Activated CD4-positive, alpha-beta T cell treated with anti-CD3 and anti-CD28 coated beads for 36 hours (primary cell): ENCODE measurements at regions of chr1 and their contacts with region 1.

Region 1: GRCh38 chr1:15949453-15950245 is 26.3 kb downstream of the ZBTB17 start:
- DNase-seq: peak; percentile 94
- ATAC-seq: peak; percentile 75
- H3K4me3 Mint-ChIP-seq: peak overlapping the region; percentile 61
- H3K27ac Mint-ChIP-seq: peak overlapping the region; percentile 95
- H3K4me1 Mint-ChIP-seq: peaks cover 74% of the 10 kb centered on the region
- H3K27me3 Mint-ChIP-seq: no peaks in the 10 kb centered on the region

Region 2: DNA sequence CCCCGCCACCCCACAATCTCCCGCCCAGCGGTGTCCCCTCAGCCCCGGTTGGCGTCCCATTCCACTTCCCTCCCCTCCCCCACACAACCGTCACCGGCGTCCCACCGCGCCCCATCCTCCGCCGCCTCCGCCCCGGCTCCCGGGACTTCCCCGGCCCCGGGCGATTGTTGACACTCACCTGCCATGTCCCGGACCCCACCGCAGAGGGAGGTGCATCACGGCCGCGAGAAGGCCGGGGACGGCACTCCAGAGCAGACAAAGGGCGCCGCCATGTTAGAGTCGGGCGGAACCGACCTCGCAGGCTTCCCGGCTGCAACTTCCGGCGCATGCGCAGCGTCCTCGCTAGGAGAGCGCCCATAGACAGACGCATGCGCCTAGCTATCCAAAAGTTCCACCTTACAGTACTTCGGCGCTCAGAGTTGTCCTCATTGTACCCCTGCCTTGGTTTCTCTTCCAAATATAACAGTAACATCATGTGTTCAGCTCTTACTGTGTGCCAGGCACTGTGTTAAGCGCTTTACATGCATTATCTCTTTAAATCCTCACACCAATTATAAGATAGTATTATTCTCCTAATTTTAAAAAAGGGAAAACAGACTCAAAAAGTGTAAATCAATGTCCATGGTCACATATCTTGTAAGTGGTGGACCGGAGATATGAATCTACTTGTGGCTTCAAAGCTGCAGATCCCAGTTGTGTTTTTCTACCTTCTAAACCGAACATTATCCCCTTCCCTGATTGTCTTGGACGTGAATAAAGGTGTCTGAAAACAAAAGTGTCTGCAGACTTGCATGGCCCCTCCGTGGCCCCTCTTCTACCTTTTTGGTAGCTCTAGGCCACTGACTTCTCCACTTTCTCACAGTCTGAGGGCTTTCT is 26.4 kb after region 1 on chr1 and contains the start of gene ZBTB17:
- CTCF ChIA-PET with region 1: interaction called, 6 read pairs
- POLR2A ChIA-PET with region 1: interaction called, 45 read pairs
- intact Hi-C with region 1: loop called in 1 of 2 experiments (anchors 1 kb)
- DNase-seq: peak; percentile 98
- ATAC-seq: peak; percentile 89
- H3K4me3 Mint-ChIP-seq: peak within 1 kb of the TSS; percentile 85
- H3K27ac Mint-ChIP-seq: peak within 1 kb of the TSS; percentile 93
- H3K4me1 Mint-ChIP-seq: peaks cover 42% of the 10 kb centered on the region
- H3K27me3 Mint-ChIP-seq: no peaks in the 10 kb centered on the region
- total RNA-seq, gene ZBTB17: 47.7 to 48.3 TPM

Region 3: DNA sequence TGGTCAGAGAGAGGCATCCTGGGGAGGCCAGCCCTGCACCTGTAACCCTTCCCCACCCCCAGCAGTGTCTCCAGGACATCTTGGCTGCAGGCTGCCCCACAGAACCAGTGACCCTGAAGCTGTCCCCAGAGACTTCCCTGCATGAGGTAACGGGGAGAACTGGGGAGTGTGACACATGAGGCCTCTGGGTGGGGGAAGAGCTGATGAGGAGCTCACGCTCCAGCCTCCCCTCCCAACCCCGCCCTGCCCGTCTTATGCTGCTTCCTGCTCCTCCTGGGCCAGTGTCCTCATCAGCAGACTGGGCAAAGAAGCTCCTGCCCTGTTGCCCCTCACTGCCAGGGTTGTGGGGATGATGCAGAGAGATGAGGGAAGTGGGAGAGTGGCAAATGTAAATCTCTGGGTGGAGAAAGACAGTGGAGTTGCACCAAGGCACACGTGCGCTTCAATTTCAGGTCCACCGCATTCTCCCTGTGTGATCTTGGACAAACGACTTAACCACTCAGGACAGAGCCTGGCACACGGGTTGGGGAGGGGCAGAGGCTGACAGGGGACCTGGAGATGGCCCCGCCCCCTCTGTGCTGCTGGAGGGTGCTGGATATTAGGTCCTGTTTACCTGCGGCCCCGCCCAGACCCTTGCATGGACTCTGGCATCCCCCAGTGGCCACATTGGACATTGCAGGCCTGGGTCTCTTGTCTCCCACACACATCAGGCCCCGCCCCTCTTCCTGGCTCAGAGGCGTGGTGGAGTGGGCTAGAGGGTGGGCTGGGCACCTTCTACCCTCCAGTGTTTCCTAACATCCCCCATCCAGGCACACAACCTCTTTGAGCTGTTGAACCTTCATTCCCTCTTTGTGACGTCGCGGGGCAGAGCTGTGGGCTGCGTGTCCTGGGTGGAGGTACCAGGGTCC is 106.2 kb after region 1 on chr1:
- CTCF ChIA-PET with region 1: no interaction called
- POLR2A ChIA-PET with region 1: no interaction called
- intact Hi-C with region 1: no loop called
- DNase-seq: peak; percentile 94
- ATAC-seq: peak; percentile 99
- H3K4me3 Mint-ChIP-seq: no peak overlapping the region
- H3K27ac Mint-ChIP-seq: peak overlapping the region; percentile 42
- H3K4me1 Mint-ChIP-seq: peaks cover 6% of the 10 kb centered on the region
- H3K27me3 Mint-ChIP-seq: no peaks in the 10 kb centered on the region